IMR-90 (cell line): ENCODE measurements at regions of chr9 and their contacts with region 1.

Region 1: DNA sequence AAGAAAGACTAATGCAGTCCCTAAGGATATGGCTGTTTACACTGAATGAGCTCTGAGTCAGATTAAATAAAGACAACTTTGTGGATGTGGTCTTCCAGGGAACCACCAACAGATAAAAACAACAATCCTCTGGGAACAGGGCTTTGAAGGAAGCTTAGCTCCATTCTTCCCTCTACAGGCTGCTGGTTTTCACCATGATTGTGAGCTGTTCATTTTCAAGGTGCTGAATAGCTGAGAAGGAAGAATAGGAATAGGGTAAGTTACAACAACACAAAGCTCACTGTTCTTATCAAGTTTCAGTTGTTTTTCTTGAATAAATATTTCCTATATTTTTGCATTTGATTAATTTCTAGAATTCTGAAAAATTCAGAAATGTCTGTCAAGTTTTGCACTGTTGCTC is 25.9 kb upstream of the PTAR1 start:
- DNase-seq: peak; percentile 78
- ATAC-seq: peak; percentile 81
- H3K4me3 ChIP-seq: no peak overlapping the region
- H3K27ac ChIP-seq: no peak overlapping the region
- H3K4me1 ChIP-seq: no peaks in the 10 kb centered on the region; the same call in 1 of the 2 replicates
- H3K27me3 ChIP-seq: peaks cover 3% of the 10 kb centered on the region; the same call in 1 of the 2 replicates
- CTCF ChIP-seq: peak; percentile 45
- POLR2A ChIP-seq: no peak
- RAD21 ChIP-seq: peak; percentile 44

Region 2: GRCh38 chr9:69564557-69564956 is 221.2 kb before region 1 on chr9:
- CTCF ChIA-PET with region 1: no interaction called
- POLR2A ChIA-PET with region 1: no interaction called
- dilution Hi-C with region 1: no loop called
- in situ Hi-C with region 1: no loop called
- intact Hi-C with region 1: loop called (anchors 10 kb)
- DNase-seq: no peak
- ATAC-seq: no peak
- H3K4me3 ChIP-seq: no peak overlapping the region
- H3K27ac ChIP-seq: no peak overlapping the region
- H3K4me1 ChIP-seq: peaks cover 3% of the 10 kb centered on the region
- H3K27me3 ChIP-seq: no peaks in the 10 kb centered on the region
- CTCF ChIP-seq: no peak
- POLR2A ChIP-seq: no peak
- RAD21 ChIP-seq: no peak

Region 3: GRCh38 chr9:70120834-70121510 is 335.2 kb after region 1 on chr9:
- CTCF ChIA-PET with region 1: no interaction called
- POLR2A ChIA-PET with region 1: no interaction called
- dilution Hi-C with region 1: no loop called
- in situ Hi-C with region 1: no loop called
- intact Hi-C with region 1: no loop called
- DNase-seq: peak; percentile 97
- ATAC-seq: peak; percentile 95
- H3K4me3 ChIP-seq: no peak overlapping the region
- H3K27ac ChIP-seq: peak overlapping the region; percentile 54
- H3K4me1 ChIP-seq: peaks cover 15% of the 10 kb centered on the region
- H3K27me3 ChIP-seq: no peaks in the 10 kb centered on the region
- CTCF ChIP-seq: peak; percentile 47
- POLR2A ChIP-seq: no peak
- RAD21 ChIP-seq: peak; percentile 47